ENCODE measurements at regions of chr6 and their contacts with region 1.

Region 1: GRCh38 chr6:17267566-17267965 is 13.6 kb upstream of the RBM24 start:
- DNase-seq: no peak
- ATAC-seq: no peak
- H3K4me3 ChIP-seq: no peak overlapping the region
- H3K27ac ChIP-seq: no peak overlapping the region
- H3K4me1 ChIP-seq: peaks cover 11% of the 10 kb centered on the region
- H3K27me3 ChIP-seq: no peaks in the 10 kb centered on the region
- CTCF ChIP-seq: no peak
- EP300 ChIP-seq: no peak
- POLR2A ChIP-seq: no peak
- RAD21 ChIP-seq: no peak

Region 2: DNA sequence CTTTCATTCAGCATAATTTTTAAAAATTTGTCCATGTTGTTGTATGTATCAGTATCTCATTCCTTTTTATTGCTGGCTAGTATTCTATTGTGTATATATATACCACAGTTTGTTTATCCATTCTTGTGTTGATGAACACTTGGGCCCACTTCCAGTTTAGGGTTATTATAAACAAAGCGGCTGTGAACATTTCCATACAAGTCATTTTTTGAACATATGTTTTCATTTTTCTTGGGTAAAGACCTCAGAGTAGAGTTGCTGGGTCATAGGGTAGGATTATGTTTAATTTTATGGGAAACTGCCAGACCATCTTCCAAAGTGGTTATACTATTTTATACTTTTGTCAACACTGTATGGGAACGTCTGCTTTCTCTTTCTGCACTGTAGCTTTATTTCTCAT is 68.9 kb after region 1 on chr6:
- CTCF ChIA-PET with region 1: no interaction called
- POLR2A ChIA-PET with region 1: no interaction called
- in situ Hi-C with region 1: no loop called
- intact Hi-C with region 1: loop called (anchors 2 kb)
- DNase-seq: no peak
- ATAC-seq: no peak
- H3K4me3 ChIP-seq: no peak overlapping the region
- H3K27ac ChIP-seq: no peak overlapping the region
- H3K4me1 ChIP-seq: peaks cover 11% of the 10 kb centered on the region
- H3K27me3 ChIP-seq: no peaks in the 10 kb centered on the region
- CTCF ChIP-seq: no peak
- EP300 ChIP-seq: no peak
- POLR2A ChIP-seq: no peak
- RAD21 ChIP-seq: no peak

Measured in HepG2 (cell line).